Activated naive CD4-positive, alpha-beta T cell treated with anti-CD3 and anti-CD28 coated beads for 36 hours (primary cell): ENCODE measurements at regions of chr6 and their contacts with region 1.

Region 1: GRCh38 chr6:136226027-136226673 is 24.0 kb downstream of the MTFR2 start:
- DNase-seq: peak; percentile 66
- H3K4me3 Mint-ChIP-seq: no peak overlapping the region
- H3K27ac Mint-ChIP-seq: no peak overlapping the region
- H3K4me1 Mint-ChIP-seq: peaks cover 7% of the 10 kb centered on the region
- H3K27me3 Mint-ChIP-seq: no peaks in the 10 kb centered on the region

Region 2: GRCh38 chr6:135506270-135506997 is 719.7 kb before region 1 on chr6:
- CTCF ChIA-PET with region 1: interaction called, 10 read pairs
- intact Hi-C with region 1: loop called (anchors 1 kb)
- DNase-seq: peak; percentile 12
- H3K4me3 Mint-ChIP-seq: no peak overlapping the region
- H3K27ac Mint-ChIP-seq: no peak overlapping the region
- H3K4me1 Mint-ChIP-seq: peaks cover 2% of the 10 kb centered on the region
- H3K27me3 Mint-ChIP-seq: no peaks in the 10 kb centered on the region

Region 3: GRCh38 chr6:135909737-135910387 is 316.3 kb before region 1 on chr6:
- CTCF ChIA-PET with region 1: interaction called, 11 read pairs
- intact Hi-C with region 1: loop called (anchors 2 kb)
- DNase-seq: peak; percentile 80
- H3K4me3 Mint-ChIP-seq: no peak overlapping the region
- H3K27ac Mint-ChIP-seq: no peak overlapping the region
- H3K4me1 Mint-ChIP-seq: peaks cover 3% of the 10 kb centered on the region
- H3K27me3 Mint-ChIP-seq: no peaks in the 10 kb centered on the region

Region 4: DNA sequence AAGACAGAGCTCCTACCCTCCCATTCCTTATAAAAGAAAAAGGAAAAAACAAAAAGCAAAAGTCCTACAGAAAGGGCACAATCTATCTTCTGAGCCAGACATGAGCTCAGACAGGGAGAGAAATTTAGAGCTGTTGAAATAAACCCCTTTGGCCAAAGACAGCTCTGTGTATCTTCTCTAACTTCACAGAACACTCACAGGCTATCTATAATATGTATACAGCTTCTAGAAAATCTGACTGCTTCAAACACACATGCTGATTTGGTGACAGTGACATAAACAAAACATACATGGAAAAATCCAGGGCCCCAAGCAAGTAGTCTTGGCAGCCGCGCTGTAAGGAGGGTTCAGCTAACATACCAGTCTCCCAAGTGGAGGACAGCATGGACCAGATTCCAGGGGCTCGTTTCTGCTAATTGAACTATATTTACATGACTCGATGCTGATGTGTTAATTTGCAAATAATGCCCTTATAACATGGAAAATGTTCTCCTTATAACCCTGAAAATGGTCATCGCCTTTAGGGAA is 13.1 kb before region 1 on chr6:
- CTCF ChIA-PET with region 1: interaction called, 12 read pairs
- intact Hi-C with region 1: no loop called
- DNase-seq: no peak
- H3K4me3 Mint-ChIP-seq: no peak overlapping the region
- H3K27ac Mint-ChIP-seq: no peak overlapping the region
- H3K4me1 Mint-ChIP-seq: no peaks in the 10 kb centered on the region
- H3K27me3 Mint-ChIP-seq: no peaks in the 10 kb centered on the region